Left cardiac atrium (tissue), 4 donors: ENCODE measurements at regions of chr13 and their contacts with region 1.

Region 1: DNA sequence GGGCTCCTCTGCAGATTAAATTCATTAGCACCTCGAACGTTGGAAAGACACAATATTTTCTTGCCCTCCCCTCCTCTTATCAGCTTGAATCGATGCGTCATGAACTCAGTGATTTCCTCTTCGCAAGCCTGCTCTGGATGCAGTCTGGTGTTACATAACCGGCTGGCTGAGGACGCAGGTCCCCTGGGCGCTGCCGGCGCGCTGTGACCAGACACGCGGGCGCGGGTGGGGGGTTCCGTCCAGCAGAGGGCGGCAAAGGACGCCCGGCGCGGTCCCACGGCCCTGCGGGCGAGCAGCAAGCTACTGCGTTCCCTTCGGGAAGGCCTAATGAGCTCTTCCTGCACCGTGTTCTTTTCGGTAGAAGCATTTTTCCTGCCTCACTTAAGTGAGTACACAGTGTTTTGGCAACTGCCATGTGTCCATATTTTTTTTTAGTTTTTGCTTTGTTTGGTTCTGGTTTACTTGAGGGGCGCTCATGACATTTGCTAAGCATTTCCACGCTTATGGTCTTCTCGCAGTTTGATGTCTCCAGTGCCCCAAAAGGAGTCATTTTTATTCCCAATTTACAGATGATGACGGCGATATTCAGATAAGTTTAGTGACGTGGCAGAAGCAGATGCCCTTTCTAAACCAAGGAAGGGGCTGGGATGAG is 112.2 kb upstream of the MBNL2 start:
- DNase-seq: peak; percentile 93
- ATAC-seq: peak; percentile 95 to 98

Region 2: DNA sequence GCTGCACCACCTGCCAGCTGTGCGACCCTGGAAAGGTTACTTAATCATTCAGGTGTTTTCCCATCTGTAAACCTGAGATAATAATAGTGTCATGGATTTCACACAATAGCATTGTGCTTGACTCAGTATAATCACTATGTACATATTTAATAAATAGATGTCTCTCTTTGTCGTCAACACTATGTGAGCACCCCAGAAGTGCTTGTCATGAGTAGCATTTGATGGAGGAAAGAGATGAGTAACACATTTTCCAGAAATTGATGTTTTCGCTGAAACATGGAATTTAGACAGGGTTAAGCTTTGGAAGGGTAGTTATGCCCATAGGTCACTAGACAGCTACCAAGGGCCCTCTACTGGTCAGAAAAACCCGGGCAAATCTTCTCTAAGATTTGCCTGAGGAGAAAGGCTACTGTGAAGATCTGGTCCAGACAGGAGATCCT is 102.7 kb after region 1 on chr13:
- intact Hi-C with region 1: loop called (anchors 5 kb)
- DNase-seq: no peak
- ATAC-seq: peak; percentile 76

Region 3: GRCh38 chr13:97344265-97345175 is 234.6 kb after region 1 on chr13:
- intact Hi-C with region 1: loop called (anchors 5 to 10 kb)
- DNase-seq: peak; percentile 62
- ATAC-seq: peak; percentile 81 to 84

Region 4: GRCh38 chr13:97359181-97360057 is 249.5 kb after region 1 on chr13:
- intact Hi-C with region 1: loop called (anchors 2 to 5 kb)
- DNase-seq: no peak
- ATAC-seq: peak; percentile 90 to 94